ENCODE measurements at regions of chr10 and their contacts with region 1.

Region 1: DNA sequence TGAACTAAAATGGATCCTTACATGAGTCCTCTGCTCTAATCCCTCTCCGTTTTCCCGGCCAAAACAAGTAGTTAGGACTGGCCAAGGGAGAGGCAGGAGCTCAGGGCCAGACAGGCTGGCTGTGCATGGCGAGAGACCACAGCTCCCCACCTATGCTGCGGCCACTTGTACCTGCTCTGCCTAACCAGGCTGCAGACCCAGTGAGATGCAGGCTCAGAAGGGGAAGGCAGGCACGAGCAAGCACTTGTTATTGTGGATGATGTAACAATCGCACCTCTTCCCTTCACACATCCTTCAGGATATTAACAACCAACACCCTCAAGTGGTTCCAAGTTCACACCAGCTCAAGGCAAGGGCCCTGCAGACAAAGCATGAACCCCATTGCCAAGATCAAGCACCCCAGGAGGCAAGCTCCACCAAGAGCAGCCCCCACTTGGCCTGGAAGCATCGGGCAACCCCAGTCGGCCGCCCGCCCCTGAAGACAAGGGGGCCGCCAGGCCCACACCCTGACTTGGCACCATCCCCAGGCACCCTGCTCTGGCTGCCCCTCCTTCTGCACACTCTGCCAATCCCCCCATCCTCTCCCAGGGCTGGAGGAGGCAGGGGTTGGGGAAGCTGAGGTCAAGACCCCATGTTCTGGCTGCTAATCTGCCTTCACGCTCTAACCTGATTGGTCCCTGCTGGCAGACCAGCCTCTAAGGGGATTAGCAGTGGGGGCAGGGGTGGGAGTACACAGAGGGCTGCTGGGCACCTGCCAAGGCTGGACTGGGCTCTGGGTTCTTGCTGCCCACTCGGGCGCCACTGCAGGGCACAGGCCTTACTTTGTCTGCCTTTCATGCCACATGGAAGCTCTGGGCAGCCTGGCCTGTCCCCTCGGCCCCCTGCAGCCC is 111.3 kb downstream of the SLIT1 start:
- DNase-seq: no peak
- H3K4me3 ChIP-seq: no peak overlapping the region
- H3K27ac ChIP-seq: no peak overlapping the region
- H3K4me1 ChIP-seq: no peaks in the 10 kb centered on the region
- H3K27me3 ChIP-seq: no peaks in the 10 kb centered on the region
- CTCF ChIP-seq: no peak
- POLR2A ChIP-seq: no peak

Region 2: DNA sequence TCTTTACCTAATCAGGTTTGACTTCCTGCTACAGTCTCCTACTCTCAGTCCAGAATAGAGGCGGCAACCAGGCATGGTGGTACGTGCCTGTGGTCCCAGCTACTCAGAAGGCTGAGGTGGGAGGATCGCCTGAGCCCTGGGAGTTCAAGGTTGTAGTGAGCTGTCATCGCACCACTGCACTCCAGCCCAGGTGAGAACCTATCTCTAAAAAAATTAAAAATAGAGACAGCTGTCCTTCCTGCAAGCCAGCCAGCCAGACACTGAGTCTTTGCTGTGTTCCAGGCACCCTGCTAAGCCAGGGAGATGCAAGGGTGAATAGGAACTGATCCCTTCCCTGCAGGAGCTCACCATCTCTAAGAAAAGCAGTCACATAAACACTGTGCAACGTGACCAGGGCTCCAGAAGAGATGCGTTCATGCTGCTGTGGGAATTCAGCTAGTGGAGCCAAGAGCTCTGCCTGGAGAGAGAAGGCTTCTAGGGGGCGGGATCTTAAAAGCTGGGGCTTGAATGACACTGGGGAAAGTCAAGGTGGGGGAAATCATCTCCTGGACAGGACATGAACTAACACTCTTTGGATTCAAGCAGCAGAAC is 133.3 kb after region 1 on chr10:
- intact Hi-C with region 1: loop called (anchors 5 kb)
- DNase-seq: no peak
- H3K4me3 ChIP-seq: no peak overlapping the region
- H3K27ac ChIP-seq: no peak overlapping the region
- H3K4me1 ChIP-seq: no peaks in the 10 kb centered on the region
- H3K27me3 ChIP-seq: no peaks in the 10 kb centered on the region
- CTCF ChIP-seq: no peak
- POLR2A ChIP-seq: no peak

Measured in testis (tissue), 5 donors.